Activated naive CD4-positive, alpha-beta T cell treated with anti-CD3 and anti-CD28 coated beads for 36 hours (primary cell): ENCODE measurements at regions of chr15 and their contacts with region 1.

Region 1: DNA sequence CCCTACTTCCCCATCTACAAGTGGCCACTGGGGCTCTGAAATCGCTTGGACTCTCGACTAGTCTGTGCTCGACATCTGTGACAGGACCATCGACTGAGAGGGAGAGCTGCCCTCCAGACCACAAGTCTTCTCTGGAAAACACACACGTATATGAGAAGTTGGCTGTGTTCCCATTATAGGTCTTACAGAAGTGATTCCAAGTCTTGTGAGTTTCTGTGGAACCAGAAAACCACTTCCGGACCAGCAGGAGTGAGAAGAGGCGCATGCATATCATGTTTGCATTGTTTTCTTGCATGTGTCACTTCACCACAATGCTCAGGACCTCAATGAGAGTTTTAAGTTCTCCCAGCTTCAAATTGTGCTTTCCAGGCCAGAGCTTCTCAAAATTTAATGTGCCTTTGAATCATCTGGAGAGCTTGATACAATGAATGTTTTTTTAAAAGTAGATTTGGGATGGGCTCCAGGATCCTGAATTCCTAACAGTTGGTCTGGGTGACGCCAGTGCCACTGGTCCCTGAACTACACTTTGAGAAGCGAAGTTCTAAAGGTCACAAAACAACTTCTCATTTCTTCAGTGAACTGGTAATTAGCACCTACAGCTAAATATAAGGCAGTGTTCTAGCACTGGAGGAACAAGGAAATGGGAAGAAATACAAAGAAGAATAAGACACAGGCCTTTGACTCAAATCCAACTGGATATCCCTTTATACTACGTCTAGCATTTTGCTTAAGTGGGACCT is 15.7 kb downstream of the LIPC start:
- DNase-seq: no peak
- H3K4me3 Mint-ChIP-seq: no peak overlapping the region
- H3K27ac Mint-ChIP-seq: no peak overlapping the region
- H3K4me1 Mint-ChIP-seq: peaks cover 5% of the 10 kb centered on the region
- H3K27me3 Mint-ChIP-seq: no peaks in the 10 kb centered on the region

Region 2: DNA sequence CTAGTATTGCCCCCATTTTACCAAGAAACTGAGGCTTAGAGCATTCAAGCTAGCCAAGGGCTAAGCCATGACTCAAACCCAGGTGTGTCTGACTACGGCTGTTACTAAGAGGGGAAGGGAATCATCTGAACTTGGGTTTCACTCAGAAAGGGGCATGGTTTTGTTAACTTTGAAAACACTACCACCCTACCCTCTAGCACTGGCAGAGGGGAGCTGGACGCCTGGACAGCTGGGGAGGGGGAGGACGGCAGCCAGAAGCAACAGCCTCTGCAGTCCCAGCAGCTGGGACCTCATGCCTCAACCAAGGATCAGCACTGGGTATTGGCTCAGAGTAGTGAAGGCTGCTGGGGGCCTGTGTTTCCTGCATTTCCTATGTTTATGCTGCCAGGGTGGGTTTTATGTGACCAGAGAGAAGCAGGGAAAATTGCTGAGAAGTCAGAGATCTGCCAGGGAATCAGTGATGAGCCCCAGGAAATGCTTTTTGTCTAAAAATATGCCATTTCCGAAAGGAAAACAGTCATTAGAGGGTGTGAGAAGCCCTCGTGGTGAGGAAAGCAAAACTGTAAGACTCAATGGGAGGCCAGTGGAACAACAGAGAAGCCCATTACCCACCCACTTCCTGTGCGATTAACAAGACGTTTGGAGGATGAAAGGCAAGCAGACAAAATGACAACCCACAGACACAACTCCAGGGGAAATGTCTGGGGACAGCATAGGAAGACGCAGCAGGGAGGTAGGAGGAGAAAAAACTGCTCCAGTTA is 25.6 kb after region 1 on chr15:
- CTCF ChIA-PET with region 1: no interaction called
- intact Hi-C with region 1: no loop called
- DNase-seq: peak; percentile 74
- H3K4me3 Mint-ChIP-seq: peak overlapping the region; percentile 55
- H3K27ac Mint-ChIP-seq: peak overlapping the region; percentile 79
- H3K4me1 Mint-ChIP-seq: peaks cover 52% of the 10 kb centered on the region
- H3K27me3 Mint-ChIP-seq: no peaks in the 10 kb centered on the region

Region 3: GRCh38 chr15:58484791-58485600 is 37.6 kb after region 1 on chr15:
- CTCF ChIA-PET with region 1: no interaction called
- intact Hi-C with region 1: loop called (anchors 5 kb)
- DNase-seq: peak; percentile 52
- H3K4me3 Mint-ChIP-seq: peak overlapping the region; percentile 3
- H3K27ac Mint-ChIP-seq: peak overlapping the region; percentile 65
- H3K4me1 Mint-ChIP-seq: peaks cover 39% of the 10 kb centered on the region
- H3K27me3 Mint-ChIP-seq: no peaks in the 10 kb centered on the region